ENCODE measurements at regions of chr2 and their contacts with region 1.

Region 1: DNA sequence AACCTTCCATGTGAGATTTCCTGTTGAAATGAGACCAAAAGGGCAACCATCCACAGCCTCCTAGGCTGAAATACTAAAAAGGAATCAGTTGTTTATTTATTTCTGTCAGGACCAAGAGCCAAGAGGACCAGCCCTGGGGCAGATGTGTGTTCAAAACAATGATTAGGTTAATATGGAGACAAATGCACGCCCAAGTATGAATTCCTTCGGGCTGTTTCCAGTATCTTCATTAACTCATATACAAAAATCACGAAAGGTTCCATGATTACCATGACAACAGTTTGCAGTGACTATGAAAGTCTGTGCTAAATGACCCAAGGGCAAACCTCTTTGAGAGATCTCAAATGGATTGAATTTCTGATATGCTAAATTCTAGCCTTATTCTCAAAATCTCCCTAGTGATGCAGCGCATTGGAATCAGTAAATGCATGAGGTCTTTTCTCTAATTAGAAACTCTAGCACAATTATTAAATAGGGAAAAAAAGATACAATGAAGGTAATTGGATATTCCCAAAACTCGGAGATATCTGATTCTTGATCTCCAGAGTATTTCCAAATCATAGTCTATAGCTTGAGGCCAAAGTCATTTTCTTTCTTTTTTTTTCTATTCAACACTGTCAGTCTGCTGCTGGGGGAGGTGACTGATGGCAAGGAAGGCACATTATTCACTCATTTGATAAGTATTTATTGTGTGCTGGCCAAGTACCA is 35.6 kb downstream of the VIT start:
- DNase-seq: no peak
- H3K4me3 ChIP-seq: no peak overlapping the region
- CTCF ChIP-seq: no peak
- POLR2A ChIP-seq: no peak

Region 2: DNA sequence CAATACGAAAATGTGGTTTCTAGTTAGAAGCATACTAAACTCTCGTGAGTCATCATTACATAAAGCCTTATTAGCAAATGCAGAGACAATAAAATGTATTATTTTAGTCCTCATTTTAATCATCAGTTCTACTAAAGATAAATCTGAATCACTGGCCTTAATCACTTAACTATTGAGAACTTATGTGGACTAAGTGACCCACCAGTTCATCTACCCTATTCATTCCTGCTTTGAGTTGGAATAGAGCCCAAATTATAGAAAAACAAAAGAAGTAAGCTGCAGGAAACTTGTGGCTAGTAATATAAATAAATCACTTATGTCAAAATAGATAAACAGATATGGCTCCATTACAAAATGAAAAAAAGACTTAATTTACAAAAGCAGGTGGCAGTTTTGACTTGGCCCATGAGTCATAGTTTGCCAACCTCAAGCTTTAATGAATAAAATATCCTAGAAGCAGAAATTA is 1228.3 kb before region 1 on chr2:
- intact Hi-C with region 1: no loop called
- DNase-seq: no peak
- H3K4me3 ChIP-seq: no peak overlapping the region
- CTCF ChIP-seq: no peak
- POLR2A ChIP-seq: no peak

Region 3: DNA sequence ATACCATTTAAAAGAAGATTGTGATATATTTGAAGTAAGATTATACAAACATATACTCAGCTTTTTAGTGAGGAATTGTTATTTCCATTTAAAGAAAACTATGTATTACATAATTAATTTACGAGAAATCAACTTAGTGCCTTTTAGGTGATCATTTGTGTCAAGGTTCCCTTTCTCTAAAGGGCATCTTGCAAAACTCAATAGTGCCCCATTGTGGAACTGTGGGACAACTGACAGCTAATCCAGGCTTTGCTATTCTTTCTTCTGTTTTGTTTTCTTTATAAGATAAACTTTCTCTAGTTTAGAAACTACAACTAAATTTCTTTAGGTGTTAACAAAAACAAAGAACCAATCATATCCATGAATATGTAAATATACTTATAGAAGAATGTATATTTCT is 59.9 kb before region 1 on chr2:
- intact Hi-C with region 1: no loop called
- DNase-seq: no peak
- H3K4me3 ChIP-seq: no peak overlapping the region
- CTCF ChIP-seq: no peak
- POLR2A ChIP-seq: no peak

Region 4: GRCh38 chr2:36707050-36707449 is 25.0 kb before region 1 on chr2:
- intact Hi-C with region 1: loop called (anchors 2 kb)
- DNase-seq: peak; percentile 54 to 83
- H3K4me3 ChIP-seq: no peak overlapping the region
- CTCF ChIP-seq: no peak
- POLR2A ChIP-seq: no peak

Measured in lower leg skin (tissue), 4 donors.